A549 (cell line): ENCODE measurements at regions of chr2 and their contacts with region 1.

Region 1: DNA sequence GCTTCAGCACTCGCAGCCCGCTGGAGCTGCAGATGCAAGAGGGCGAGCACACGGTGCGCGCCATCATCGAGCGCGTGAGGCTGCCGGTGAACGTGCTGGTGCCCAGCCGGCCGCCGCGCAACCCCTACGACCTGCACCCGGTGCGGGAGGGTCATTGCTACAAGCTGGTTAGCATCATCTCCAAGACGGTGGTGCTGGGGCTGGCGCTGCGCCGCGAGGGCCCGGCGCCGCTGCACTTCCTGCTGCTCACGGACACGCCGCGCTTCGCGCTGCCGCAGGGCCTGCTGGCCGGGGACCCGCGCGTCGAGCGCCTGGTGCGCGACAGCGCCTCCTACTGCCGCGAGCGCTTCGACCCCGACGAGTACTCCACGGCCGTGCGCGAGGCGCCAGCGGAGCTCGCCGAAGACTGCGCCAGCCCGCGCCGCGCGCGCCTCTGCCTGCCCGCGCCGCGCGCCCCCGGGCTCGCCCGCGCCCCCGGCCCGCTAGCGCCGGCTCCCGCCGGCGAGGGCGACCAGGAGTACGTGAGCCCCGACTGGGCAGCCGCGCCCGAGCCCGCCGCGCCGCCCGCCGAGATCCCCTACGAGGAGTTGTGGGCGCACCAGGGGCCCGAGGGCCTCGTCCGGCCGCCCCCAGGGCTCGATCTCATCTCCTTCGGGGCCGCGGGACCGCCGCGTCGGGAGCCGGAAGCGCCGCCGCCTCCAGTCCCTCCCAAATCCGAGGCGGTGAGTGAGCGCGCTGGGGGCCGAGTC is 11.8 kb downstream of the GAREM2 start:
- DNase-seq: peak; percentile 86 to 94
- ATAC-seq: peak; percentile 77 to 85
- H3K4me3 ChIP-seq: peak overlapping the region; percentile 64
- H3K27ac ChIP-seq: peak overlapping the region; percentile 84 to 93
- H3K4me1 ChIP-seq: peaks cover 7% of the 10 kb centered on the region; the same call in 2 of the 3 replicates
- CTCF ChIP-seq: peak; percentile 95
- EP300 ChIP-seq: no peak
- POLR2A ChIP-seq: peak; percentile 33
- RAD21 ChIP-seq: peak; percentile 47 to 62; a peak in 3 of 5 replicates

Region 2: GRCh38 chr2:26164231-26164630 is 20.5 kb before region 1 on chr2:
- CTCF ChIA-PET with region 1: interaction called, 32 read pairs
- POLR2A ChIA-PET with region 1: no interaction called
- DNase-seq: no peak
- ATAC-seq: no peak
- H3K4me3 ChIP-seq: no peak overlapping the region
- H3K27ac ChIP-seq: no peak overlapping the region
- H3K4me1 ChIP-seq: no peaks in the 10 kb centered on the region
- CTCF ChIP-seq: no peak
- EP300 ChIP-seq: no peak
- POLR2A ChIP-seq: no peak
- RAD21 ChIP-seq: no peak

Region 3: DNA sequence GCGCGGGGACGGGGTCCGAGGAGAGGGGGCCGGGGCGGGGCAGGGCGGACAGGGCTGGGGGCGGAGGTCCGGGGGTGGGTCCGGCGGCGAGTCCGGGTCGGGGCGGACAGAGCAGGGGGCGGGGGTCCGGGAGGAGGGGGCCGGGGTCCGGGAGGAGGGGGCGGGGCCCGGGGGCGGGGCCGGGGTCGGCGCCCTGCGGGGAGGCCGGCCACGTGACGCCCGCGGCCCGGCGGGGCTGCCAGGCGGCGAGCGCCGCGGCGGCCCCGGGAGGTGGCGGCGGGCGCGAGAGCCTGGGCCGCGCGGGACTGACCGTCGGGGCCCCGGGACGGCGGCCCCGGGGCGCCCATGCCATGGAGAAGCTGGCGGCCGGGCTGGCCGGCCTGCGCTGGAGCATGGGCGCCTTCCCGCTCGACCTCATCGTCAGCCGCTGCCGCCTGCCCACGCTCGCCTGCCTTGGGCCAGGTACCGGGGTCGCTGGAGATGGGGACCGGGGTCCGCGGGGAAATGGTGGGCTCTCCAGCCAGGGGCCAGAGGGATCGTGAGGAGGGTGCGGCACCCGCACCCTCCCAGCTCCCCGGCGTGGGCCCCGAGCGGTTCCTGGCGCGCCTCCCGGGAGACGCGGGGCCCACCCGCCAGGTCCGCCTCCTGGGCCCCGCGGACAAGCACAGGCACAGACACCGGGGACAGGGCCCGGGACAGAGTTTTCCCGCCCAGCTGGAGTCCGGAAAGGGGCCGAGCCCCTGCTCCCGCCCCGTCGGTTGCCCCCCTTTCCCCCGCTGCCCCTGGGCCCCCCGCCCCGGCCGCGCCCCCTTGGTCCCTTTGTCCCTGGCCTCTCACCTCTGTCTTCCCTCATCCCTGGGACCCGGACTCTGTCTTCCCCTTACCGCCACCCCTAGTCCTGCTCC is 11.6 kb before region 1 on chr2 and contains the start of gene GAREM2:
- CTCF ChIA-PET with region 1: interaction called, 77 read pairs
- POLR2A ChIA-PET with region 1: interaction called, 9 read pairs
- DNase-seq: peak in 1 of 2 experiments; percentile 59
- ATAC-seq: peak; percentile 27 to 60
- H3K4me3 ChIP-seq: peak within 1 kb of the TSS; percentile 68
- H3K27ac ChIP-seq: peak within 1 kb of the TSS; percentile 76 to 93
- H3K4me1 ChIP-seq: peaks cover 6% of the 10 kb centered on the region; the same call in 1 of the 3 replicates
- CTCF ChIP-seq: no peak
- EP300 ChIP-seq: no peak
- POLR2A ChIP-seq: no peak
- RAD21 ChIP-seq: no peak
- polyA plus RNA-seq, gene GAREM2: 5.1 and 6.6 TPM in 2 replicates

Region 4: DNA sequence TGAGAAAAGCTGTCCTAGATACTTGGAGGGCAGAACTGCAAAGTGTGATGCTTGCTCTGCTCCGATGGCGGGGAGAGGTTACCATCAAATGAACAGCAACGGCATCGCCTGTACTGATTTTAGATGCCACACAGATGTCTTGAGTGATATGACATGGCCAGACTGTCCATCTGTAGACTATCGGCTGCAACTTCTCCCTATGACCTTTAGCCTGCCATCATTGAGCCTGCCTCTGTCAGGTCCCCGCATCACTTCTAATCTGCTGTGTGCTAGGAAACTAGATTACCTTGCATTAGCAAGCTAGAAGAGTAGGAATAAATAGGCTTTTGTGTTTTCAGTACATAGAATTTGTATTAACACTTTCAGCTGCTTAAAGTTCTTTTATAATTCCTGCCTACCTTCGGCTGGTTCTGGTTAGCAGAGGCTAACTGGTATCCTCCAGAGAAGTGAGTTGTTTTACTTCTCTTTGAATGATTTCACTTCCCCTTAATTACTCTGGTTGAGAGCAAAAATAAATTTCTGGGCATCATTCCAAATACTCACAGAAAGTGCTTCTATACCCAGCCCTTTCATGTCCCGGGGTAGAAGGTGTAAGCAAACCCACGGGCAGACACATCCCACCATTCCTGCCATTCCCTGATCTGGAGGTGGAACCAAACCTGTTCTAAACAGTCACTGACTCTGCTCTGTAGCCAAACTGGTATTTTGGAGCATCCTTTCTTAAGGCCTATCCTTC is 12.1 kb after region 1 on chr2:
- CTCF ChIA-PET with region 1: interaction called, 33 read pairs
- POLR2A ChIA-PET with region 1: no interaction called
- DNase-seq: no peak
- ATAC-seq: no peak
- H3K4me3 ChIP-seq: no peak overlapping the region
- H3K27ac ChIP-seq: no peak overlapping the region
- H3K4me1 ChIP-seq: no peaks in the 10 kb centered on the region
- CTCF ChIP-seq: no peak
- EP300 ChIP-seq: no peak
- POLR2A ChIP-seq: no peak
- RAD21 ChIP-seq: no peak

Region 5: GRCh38 chr2:26202981-26203490 is 18.3 kb after region 1 on chr2:
- CTCF ChIA-PET with region 1: interaction called, 33 read pairs
- POLR2A ChIA-PET with region 1: no interaction called
- DNase-seq: no peak
- ATAC-seq: no peak
- H3K4me3 ChIP-seq: no peak overlapping the region
- H3K27ac ChIP-seq: no peak overlapping the region
- H3K4me1 ChIP-seq: no peaks in the 10 kb centered on the region
- CTCF ChIP-seq: no peak
- EP300 ChIP-seq: no peak
- POLR2A ChIP-seq: no peak
- RAD21 ChIP-seq: no peak

Region 6: DNA sequence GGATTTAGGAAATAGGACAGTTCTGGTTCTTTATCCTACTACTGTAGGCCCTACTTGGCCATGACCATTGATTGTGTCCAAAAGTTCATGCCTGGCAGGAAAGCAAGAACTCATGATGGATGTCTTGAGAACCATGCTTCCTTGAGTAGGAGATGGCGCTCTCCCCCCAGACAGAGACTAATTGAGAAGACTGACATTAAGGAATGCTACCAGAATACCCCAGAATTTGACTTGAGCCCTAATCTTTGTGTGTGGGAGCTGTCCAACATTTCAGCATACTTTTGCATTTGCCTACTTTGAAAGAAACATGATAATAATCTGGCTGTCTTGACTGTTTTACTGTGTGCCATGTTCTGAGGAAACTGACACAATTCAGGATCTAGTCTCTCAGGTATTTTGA is 809.0 kb after region 1 on chr2:
- CTCF ChIA-PET with region 1: no interaction called
- POLR2A ChIA-PET with region 1: no interaction called
- DNase-seq: no peak
- ATAC-seq: no peak
- H3K4me3 ChIP-seq: no peak overlapping the region
- H3K27ac ChIP-seq: no peak overlapping the region
- H3K4me1 ChIP-seq: peaks cover 3% of the 10 kb centered on the region; the same call in 1 of the 3 replicates
- CTCF ChIP-seq: no peak
- EP300 ChIP-seq: no peak
- POLR2A ChIP-seq: no peak
- RAD21 ChIP-seq: no peak